ENCODE measurements at regions of chr7 and their contacts with region 1.

Region 1: GRCh38 chr7:85023045-85023712 is 163.7 kb downstream of the SEMA3D start:
- DNase-seq: peak; percentile 69
- H3K4me3 ChIP-seq: no peak overlapping the region
- H3K27ac ChIP-seq: no peak overlapping the region
- H3K4me1 ChIP-seq: peaks cover 12% of the 10 kb centered on the region
- H3K27me3 ChIP-seq: no peaks in the 10 kb centered on the region
- CTCF ChIP-seq: peak; percentile 20 to 29
- POLR2A ChIP-seq: no peak

Region 2: DNA sequence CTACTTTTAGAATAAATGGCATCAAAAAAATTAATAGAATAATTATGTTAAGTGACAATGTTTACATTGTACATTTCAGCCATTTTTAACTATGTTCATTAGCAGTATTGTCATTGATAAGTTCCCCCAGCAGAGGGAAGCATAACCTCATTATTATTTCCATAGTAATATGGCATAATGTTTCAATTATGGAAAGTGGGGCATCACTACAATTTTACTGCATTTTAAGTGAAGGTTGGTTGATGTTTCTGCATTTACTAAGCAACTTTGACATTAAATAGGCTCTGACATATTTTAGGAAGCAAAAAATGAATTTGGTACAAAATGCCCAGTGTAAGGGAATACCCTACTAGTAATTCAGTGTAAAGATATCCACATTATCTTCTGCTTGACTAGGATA is 1046.9 kb before region 1 on chr7:
- CTCF ChIA-PET with region 1: interaction called, 42 read pairs
- POLR2A ChIA-PET with region 1: no interaction called
- dilution Hi-C with region 1: no loop called
- intact Hi-C with region 1: loop called (anchors 1 kb)
- DNase-seq: peak; percentile 55
- H3K4me3 ChIP-seq: no peak overlapping the region
- H3K27ac ChIP-seq: no peak overlapping the region
- H3K4me1 ChIP-seq: no peaks in the 10 kb centered on the region
- H3K27me3 ChIP-seq: no peaks in the 10 kb centered on the region
- CTCF ChIP-seq: peak; percentile 23 to 30
- POLR2A ChIP-seq: no peak

Region 3: DNA sequence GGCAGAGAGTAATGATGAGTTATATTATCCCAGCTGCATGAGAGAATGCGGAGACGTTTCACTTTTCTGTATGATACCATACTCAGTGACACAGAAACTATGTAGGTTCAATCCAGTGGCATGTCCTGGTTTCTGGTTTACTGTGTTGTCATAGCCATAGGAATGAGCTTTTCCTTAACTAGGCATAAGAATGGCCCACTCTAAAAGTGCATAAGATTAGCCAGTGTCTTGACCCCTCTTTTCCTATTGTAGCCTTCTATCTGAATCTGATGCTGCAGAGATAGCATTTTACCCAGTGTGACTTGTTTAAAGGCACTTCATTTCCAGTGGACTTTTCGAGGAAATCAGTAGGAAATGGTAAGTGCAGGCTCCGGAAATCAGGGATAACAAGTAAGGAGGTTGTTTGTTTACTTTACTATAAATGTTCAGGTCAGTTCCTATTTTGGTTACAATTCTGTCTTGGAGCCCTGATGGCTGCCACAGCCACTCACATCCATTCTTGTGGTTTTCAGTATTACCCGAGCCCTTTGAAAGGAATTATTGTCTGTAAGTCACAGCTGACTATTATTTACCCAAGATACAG is 899.1 kb before region 1 on chr7:
- CTCF ChIA-PET with region 1: no interaction called
- POLR2A ChIA-PET with region 1: no interaction called
- dilution Hi-C with region 1: no loop called
- intact Hi-C with region 1: loop called (anchors 10 kb)
- DNase-seq: peak; percentile 85
- H3K4me3 ChIP-seq: peak overlapping the region in 1 of 3 experiments; percentile 38
- H3K27ac ChIP-seq: peak overlapping the region; percentile 57
- H3K4me1 ChIP-seq: peaks cover 11% of the 10 kb centered on the region
- H3K27me3 ChIP-seq: no peaks in the 10 kb centered on the region
- CTCF ChIP-seq: no peak
- POLR2A ChIP-seq: no peak

Region 4: GRCh38 chr7:84237533-84238173 is 785.5 kb before region 1 on chr7:
- CTCF ChIA-PET with region 1: interaction called, 3 read pairs
- POLR2A ChIA-PET with region 1: no interaction called
- dilution Hi-C with region 1: no loop called
- intact Hi-C with region 1: loop called (anchors 2 kb)
- DNase-seq: peak; percentile 81
- H3K4me3 ChIP-seq: no peak overlapping the region
- H3K27ac ChIP-seq: peak overlapping the region; percentile 79
- H3K4me1 ChIP-seq: peaks cover 24% of the 10 kb centered on the region
- H3K27me3 ChIP-seq: no peaks in the 10 kb centered on the region
- CTCF ChIP-seq: no peak
- POLR2A ChIP-seq: no peak

Region 5: DNA sequence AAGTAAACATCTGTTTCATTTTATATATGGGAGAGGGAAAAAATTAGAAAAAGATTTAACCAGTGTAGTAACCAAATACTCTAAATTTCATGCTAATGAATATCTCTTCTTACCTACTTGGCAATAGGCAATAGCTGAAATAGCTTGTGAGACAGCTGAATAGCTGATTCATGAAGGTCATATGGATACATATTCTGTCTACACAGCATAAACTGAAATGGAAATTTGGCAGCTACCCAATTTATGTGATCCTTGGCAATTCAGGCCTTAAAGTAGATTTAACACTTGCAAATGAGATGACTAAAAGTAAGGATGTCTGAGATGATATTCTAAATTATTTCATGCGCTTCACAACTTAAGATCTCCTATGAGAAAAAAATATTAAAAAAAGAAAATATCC is 567.4 kb before region 1 on chr7:
- CTCF ChIA-PET with region 1: interaction called, 3 read pairs
- POLR2A ChIA-PET with region 1: no interaction called
- dilution Hi-C with region 1: no loop called
- intact Hi-C with region 1: loop called (anchors 1 kb)
- DNase-seq: peak; percentile 55
- H3K4me3 ChIP-seq: no peak overlapping the region
- H3K27ac ChIP-seq: no peak overlapping the region
- H3K4me1 ChIP-seq: no peaks in the 10 kb centered on the region
- H3K27me3 ChIP-seq: no peaks in the 10 kb centered on the region
- CTCF ChIP-seq: no peak
- POLR2A ChIP-seq: no peak

Region 6: GRCh38 chr7:84614821-84615505 is 408.2 kb before region 1 on chr7:
- CTCF ChIA-PET with region 1: no interaction called
- POLR2A ChIA-PET with region 1: no interaction called
- dilution Hi-C with region 1: no loop called
- intact Hi-C with region 1: loop called (anchors 2 kb)
- DNase-seq: peak; percentile 44
- H3K4me3 ChIP-seq: no peak overlapping the region
- H3K27ac ChIP-seq: no peak overlapping the region
- H3K4me1 ChIP-seq: no peaks in the 10 kb centered on the region
- H3K27me3 ChIP-seq: no peaks in the 10 kb centered on the region
- CTCF ChIP-seq: no peak
- POLR2A ChIP-seq: no peak

Region 7: GRCh38 chr7:84701524-84702306 is 321.5 kb before region 1 on chr7:
- CTCF ChIA-PET with region 1: no interaction called
- POLR2A ChIA-PET with region 1: no interaction called
- dilution Hi-C with region 1: no loop called
- intact Hi-C with region 1: loop called (anchors 5 kb)
- DNase-seq: peak; percentile 95
- H3K4me3 ChIP-seq: peak overlapping the region in 1 of 3 experiments; percentile 5
- H3K27ac ChIP-seq: peak overlapping the region; percentile 97
- H3K4me1 ChIP-seq: peaks cover 31% of the 10 kb centered on the region
- H3K27me3 ChIP-seq: no peaks in the 10 kb centered on the region
- CTCF ChIP-seq: no peak
- POLR2A ChIP-seq: no peak

Region 8: GRCh38 chr7:84746353-84746752 is 276.8 kb before region 1 on chr7:
- CTCF ChIA-PET with region 1: no interaction called
- POLR2A ChIA-PET with region 1: no interaction called
- dilution Hi-C with region 1: no loop called
- intact Hi-C with region 1: no loop called
- DNase-seq: no peak
- H3K4me3 ChIP-seq: no peak overlapping the region
- H3K27ac ChIP-seq: no peak overlapping the region
- H3K4me1 ChIP-seq: no peaks in the 10 kb centered on the region
- H3K27me3 ChIP-seq: no peaks in the 10 kb centered on the region
- CTCF ChIP-seq: no peak
- POLR2A ChIP-seq: no peak

Region 9: DNA sequence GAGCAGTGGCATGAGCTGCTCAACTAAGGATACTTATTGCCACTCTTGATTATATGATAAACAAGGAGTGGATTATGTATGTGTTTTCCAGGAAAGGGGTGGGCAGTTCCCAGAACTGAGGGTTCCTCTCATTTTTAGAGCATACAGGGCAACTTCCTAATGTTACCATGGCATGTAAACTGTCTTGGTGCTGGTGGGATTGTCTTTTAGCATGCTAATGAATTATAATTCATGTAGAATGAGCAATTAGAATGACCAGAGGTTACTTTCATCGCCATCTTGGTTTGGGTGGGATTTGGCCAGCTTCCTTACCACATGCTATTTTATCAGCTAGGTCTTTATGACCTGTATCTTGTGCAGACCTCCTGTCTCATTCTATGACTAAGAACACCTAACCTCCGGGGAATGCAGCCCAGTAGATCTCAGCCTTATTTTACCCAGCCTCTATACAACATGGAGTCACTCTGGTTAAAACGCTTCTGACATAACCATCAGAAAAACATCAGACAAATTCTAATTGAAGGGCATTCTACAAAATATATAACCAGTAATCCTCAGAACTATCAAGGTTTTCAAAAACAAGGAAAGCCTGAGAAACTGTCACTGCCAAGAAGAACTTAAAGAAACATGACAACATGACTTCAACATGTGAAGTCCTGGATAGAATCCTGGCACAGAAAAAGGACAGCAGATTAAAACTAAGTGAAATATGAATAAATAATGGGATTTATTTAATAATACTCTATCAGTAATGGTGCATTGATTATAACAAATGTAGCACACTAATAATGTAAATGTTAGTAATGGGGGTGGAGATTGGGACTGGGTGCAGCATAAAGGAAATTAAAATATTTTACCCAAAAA is 201.3 kb before region 1 on chr7:
- CTCF ChIA-PET with region 1: no interaction called
- POLR2A ChIA-PET with region 1: no interaction called
- dilution Hi-C with region 1: no loop called
- intact Hi-C with region 1: no loop called
- DNase-seq: no peak
- H3K4me3 ChIP-seq: no peak overlapping the region
- H3K27ac ChIP-seq: no peak overlapping the region
- H3K4me1 ChIP-seq: no peaks in the 10 kb centered on the region
- H3K27me3 ChIP-seq: no peaks in the 10 kb centered on the region
- CTCF ChIP-seq: no peak
- POLR2A ChIP-seq: no peak

Region 10: GRCh38 chr7:84985073-84985784 is 38.0 kb before region 1 on chr7:
- CTCF ChIA-PET with region 1: no interaction called
- POLR2A ChIA-PET with region 1: no interaction called
- dilution Hi-C with region 1: no loop called
- intact Hi-C with region 1: no loop called
- DNase-seq: peak; percentile 17
- H3K4me3 ChIP-seq: no peak overlapping the region
- H3K27ac ChIP-seq: no peak overlapping the region
- H3K4me1 ChIP-seq: no peaks in the 10 kb centered on the region
- H3K27me3 ChIP-seq: no peaks in the 10 kb centered on the region
- CTCF ChIP-seq: no peak
- POLR2A ChIP-seq: no peak